Activated CD4-positive, alpha-beta T cell treated with anti-CD3 and anti-CD28 coated beads for 36 hours (primary cell): ENCODE measurements at regions of chr5 and their contacts with region 1.

Region 1: DNA sequence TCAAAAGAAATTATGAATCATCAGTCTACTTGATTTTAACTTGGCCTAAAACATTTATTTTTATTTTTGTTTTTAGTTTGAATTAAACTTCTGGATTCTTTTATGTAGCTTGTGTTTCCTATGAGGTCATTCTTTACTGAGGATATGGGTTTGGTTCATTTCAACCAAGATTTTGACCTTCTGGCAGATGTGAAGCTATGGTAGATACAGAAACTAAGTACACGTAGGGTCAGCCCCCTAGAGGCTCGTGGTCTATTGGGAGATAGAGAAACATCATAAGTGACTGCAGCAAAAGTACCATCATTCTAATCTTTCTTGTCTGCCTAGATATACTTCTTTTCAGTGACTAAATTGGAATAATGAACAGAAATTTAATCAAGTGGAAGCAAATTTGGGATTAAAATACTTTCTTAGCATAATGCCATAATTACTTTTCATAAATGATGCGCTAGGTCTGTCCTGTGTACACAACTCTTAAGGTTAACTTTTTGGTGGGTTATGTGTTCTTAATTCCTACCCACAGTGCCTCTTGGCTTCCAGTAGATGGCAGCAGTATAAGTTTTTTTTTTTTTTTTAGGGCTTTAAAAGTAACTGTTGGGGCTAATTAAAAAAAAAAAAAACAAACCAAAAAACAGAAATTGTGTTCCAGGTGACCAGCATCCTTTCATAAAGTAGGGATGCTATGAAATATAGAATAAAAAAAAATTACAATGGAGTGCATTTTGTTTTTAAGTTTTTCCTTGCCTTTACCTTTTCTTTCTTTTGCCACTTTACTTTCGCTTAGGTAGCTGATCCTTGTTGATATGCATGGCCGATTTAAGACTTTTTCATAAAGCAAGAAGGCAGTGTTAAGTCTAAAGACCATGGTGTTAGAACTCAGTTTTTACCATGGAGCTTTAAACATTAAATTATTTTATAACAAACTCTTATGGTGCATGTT is 49.9 kb downstream of the LRRTM2 start:
- DNase-seq: peak; percentile 8
- ATAC-seq: peak; percentile 74
- H3K4me3 Mint-ChIP-seq: no peak overlapping the region
- H3K27ac Mint-ChIP-seq: no peak overlapping the region
- H3K4me1 Mint-ChIP-seq: peaks cover 4% of the 10 kb centered on the region
- H3K27me3 Mint-ChIP-seq: peaks cover 6% of the 10 kb centered on the region

Region 2: GRCh38 chr5:138469540-138470321 is 355.5 kb before region 1 on chr5:
- CTCF ChIA-PET with region 1: no interaction called
- POLR2A ChIA-PET with region 1: no interaction called
- intact Hi-C with region 1: no loop called
- DNase-seq: peak; percentile 17
- ATAC-seq: no peak
- H3K4me3 Mint-ChIP-seq: no peak overlapping the region
- H3K27ac Mint-ChIP-seq: no peak overlapping the region
- H3K4me1 Mint-ChIP-seq: peaks cover 25% of the 10 kb centered on the region
- H3K27me3 Mint-ChIP-seq: no peaks in the 10 kb centered on the region

Region 3: GRCh38 chr5:138844812-138845513 is 19.8 kb after region 1 on chr5:
- CTCF ChIA-PET with region 1: interaction called, 10 read pairs
- POLR2A ChIA-PET with region 1: no interaction called
- intact Hi-C with region 1: no loop called
- DNase-seq: no peak
- ATAC-seq: no peak
- H3K4me3 Mint-ChIP-seq: no peak overlapping the region
- H3K27ac Mint-ChIP-seq: no peak overlapping the region
- H3K4me1 Mint-ChIP-seq: peaks cover 3% of the 10 kb centered on the region
- H3K27me3 Mint-ChIP-seq: no peaks in the 10 kb centered on the region

Region 4: DNA sequence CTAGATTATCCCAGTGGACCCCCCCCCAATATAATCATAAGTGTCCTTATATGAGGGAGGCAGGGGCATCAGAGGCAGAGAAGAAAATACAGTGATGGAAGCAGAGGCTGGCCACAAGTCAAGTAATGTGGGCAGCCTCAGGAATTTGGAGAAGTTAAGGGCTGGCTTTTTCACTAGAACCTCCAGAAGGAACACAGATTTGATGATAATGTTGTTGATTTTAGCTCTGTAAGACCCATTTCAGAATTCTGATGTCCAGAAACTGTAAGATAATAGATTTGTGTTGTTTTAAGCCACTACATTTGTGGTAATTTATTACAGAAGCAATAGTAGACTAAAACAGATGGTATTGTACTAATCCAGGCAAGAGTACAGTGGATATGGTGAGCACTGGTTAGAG is 86.2 kb after region 1 on chr5:
- CTCF ChIA-PET with region 1: no interaction called
- POLR2A ChIA-PET with region 1: no interaction called
- intact Hi-C with region 1: no loop called
- DNase-seq: no peak
- ATAC-seq: no peak
- H3K4me3 Mint-ChIP-seq: no peak overlapping the region
- H3K27ac Mint-ChIP-seq: no peak overlapping the region
- H3K4me1 Mint-ChIP-seq: no peaks in the 10 kb centered on the region
- H3K27me3 Mint-ChIP-seq: no peaks in the 10 kb centered on the region

Region 5: GRCh38 chr5:139368613-139369012 is 543.4 kb after region 1 on chr5:
- CTCF ChIA-PET with region 1: no interaction called
- POLR2A ChIA-PET with region 1: no interaction called
- intact Hi-C with region 1: loop called in 1 of 2 experiments (anchors 10 kb)
- DNase-seq: no peak
- ATAC-seq: no peak
- H3K4me3 Mint-ChIP-seq: no peak overlapping the region
- H3K27ac Mint-ChIP-seq: no peak overlapping the region
- H3K4me1 Mint-ChIP-seq: peaks cover 17% of the 10 kb centered on the region
- H3K27me3 Mint-ChIP-seq: no peaks in the 10 kb centered on the region